A549 (cell line): ENCODE measurements at regions of chr2 and their contacts with region 1.

Region 1: DNA sequence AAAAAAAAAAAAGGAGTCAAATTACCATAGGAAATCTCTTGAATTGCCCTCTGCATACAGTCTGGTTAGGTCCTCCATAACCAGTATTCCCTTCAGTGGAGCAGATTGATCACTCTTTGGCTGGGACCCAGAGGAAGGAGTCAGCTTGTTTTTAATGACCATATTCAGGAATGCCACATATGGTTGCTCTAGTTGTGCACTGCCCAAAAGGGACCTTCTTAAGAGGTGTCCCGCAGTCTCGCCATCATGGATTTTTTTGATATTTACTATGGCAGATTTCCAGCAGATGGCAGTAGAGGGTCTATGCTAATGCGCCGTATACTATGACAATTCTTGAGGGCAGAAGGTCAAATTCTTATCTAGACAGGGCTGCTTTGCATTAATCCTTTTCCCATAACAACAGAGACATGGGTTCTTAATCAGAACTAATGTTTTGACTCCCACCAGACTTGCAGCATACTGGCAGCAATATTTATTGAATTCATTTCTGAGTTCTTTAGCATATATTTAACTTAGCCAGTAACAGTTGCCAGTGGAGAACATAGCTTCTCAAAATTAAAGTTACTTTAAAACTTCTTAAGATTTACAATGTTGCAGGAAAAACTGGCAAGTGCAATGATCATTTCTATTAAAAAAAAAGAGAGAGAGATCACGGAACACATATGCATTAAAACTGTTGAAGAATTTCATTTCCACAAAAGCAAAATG is 31.8 kb upstream of the INPP4A start:
- DNase-seq: peak; percentile 54 to 72
- ATAC-seq: peak; percentile 94 to 96
- H3K4me3 ChIP-seq: no peak overlapping the region
- H3K27ac ChIP-seq: no peak overlapping the region
- H3K4me1 ChIP-seq: no peaks in the 10 kb centered on the region; the same call in 2 of the 3 replicates
- CTCF ChIP-seq: peak; percentile 86
- EP300 ChIP-seq: no peak
- POLR2A ChIP-seq: no peak
- RAD21 ChIP-seq: peak; percentile 79 to 86

Region 2: DNA sequence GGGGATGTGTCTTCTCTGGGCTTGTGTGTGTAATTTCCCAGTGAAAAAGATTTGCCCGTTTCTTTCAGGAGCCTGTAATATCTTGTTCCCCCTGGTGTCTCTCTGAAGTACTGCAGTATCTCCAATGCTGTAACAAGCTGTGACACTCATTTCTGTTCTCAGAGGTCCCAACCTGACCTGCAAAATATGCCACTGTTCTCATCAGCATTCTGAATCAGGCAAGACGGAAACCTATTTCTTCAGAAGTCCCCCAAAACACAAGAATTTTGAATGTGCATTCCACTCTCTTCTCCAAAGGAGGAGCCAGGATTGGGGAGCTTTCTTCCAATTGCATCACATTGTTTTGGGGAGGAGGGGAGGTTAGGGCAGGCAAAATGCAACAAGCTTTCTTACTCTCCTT is 143.6 kb before region 1 on chr2:
- CTCF ChIA-PET with region 1: no interaction called
- POLR2A ChIA-PET with region 1: no interaction called
- DNase-seq: peak; percentile 44 to 51
- ATAC-seq: peak; percentile 74 to 80; a peak in 5 of 6 replicates
- H3K4me3 ChIP-seq: no peak overlapping the region
- H3K27ac ChIP-seq: no peak overlapping the region; a peak in 1 of 6 replicates
- H3K4me1 ChIP-seq: no peaks in the 10 kb centered on the region
- CTCF ChIP-seq: peak; percentile 53
- EP300 ChIP-seq: no peak
- POLR2A ChIP-seq: no peak
- RAD21 ChIP-seq: peak; percentile 55 to 69; a peak in 4 of 5 replicates

Region 3: GRCh38 chr2:98396745-98397355 is 16.1 kb before region 1 on chr2:
- CTCF ChIA-PET with region 1: interaction called, 12 read pairs
- POLR2A ChIA-PET with region 1: no interaction called
- DNase-seq: no peak
- ATAC-seq: no peak
- H3K4me3 ChIP-seq: no peak overlapping the region
- H3K27ac ChIP-seq: no peak overlapping the region
- H3K4me1 ChIP-seq: no peaks in the 10 kb centered on the region
- CTCF ChIP-seq: no peak
- EP300 ChIP-seq: no peak
- POLR2A ChIP-seq: no peak
- RAD21 ChIP-seq: no peak

Region 4: DNA sequence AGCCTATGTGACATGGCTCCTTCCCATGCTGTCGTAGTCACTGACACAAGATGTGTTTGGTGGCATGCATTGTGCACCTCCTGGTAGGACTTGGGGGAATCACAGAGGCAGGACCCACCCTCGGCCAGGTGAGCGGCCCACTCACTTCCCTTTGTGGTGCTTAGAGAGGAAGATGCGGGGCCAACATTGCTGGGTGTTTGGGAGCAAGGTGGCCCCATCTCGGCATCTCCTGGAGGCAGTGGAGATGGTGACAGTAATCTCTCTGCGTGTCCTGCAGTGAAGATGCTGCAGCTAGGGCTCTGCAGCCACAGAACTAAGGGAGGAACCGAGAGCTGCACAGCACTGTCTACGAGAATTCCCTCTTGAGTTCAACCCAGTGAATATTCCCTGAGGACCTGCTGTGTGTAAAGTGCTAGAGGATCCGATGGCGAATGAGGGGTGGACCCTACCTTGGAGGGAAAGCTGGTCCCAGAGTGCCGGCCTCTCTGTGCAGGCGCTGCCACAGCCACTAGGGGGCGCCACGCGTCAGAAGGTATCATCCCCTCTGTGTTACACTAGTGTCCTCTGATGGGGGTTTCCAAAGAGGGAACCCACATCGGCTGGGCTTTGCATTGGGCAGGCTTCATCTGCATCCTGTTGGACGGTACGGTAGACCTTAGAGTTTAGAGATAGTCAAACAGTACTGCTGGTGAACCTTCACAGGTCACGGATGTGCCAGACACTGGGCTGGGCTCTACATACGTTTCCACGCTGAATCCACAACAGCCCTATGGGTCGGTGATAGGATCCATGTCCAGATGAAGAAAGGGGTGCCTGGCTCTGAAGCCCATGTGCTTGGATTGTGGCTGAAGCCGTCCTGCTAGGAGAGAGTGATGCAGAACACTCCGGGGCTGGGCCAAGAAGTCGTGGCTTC is 156.2 kb after region 1 on chr2:
- CTCF ChIA-PET with region 1: interaction called, 16 read pairs
- POLR2A ChIA-PET with region 1: no interaction called
- DNase-seq: peak; percentile 22 to 51
- ATAC-seq: peak; percentile 71 to 93; a peak in 4 of 6 replicates
- H3K4me3 ChIP-seq: no peak overlapping the region
- H3K27ac ChIP-seq: no peak overlapping the region
- H3K4me1 ChIP-seq: no peaks in the 10 kb centered on the region
- CTCF ChIP-seq: peak; percentile 71
- EP300 ChIP-seq: no peak
- POLR2A ChIP-seq: no peak
- RAD21 ChIP-seq: peak; percentile 37 to 42; a peak in 3 of 5 replicates

Region 5: GRCh38 chr2:98601532-98602132 is 188.7 kb after region 1 on chr2:
- CTCF ChIA-PET with region 1: interaction called, 23 read pairs
- POLR2A ChIA-PET with region 1: no interaction called
- DNase-seq: peak; percentile 52 to 66
- ATAC-seq: peak; percentile 99 to 100
- H3K4me3 ChIP-seq: no peak overlapping the region
- H3K27ac ChIP-seq: no peak overlapping the region
- H3K4me1 ChIP-seq: peaks cover 11% of the 10 kb centered on the region
- CTCF ChIP-seq: peak; percentile 61
- EP300 ChIP-seq: no peak
- POLR2A ChIP-seq: no peak
- RAD21 ChIP-seq: peak; percentile 62 to 70

Region 6: DNA sequence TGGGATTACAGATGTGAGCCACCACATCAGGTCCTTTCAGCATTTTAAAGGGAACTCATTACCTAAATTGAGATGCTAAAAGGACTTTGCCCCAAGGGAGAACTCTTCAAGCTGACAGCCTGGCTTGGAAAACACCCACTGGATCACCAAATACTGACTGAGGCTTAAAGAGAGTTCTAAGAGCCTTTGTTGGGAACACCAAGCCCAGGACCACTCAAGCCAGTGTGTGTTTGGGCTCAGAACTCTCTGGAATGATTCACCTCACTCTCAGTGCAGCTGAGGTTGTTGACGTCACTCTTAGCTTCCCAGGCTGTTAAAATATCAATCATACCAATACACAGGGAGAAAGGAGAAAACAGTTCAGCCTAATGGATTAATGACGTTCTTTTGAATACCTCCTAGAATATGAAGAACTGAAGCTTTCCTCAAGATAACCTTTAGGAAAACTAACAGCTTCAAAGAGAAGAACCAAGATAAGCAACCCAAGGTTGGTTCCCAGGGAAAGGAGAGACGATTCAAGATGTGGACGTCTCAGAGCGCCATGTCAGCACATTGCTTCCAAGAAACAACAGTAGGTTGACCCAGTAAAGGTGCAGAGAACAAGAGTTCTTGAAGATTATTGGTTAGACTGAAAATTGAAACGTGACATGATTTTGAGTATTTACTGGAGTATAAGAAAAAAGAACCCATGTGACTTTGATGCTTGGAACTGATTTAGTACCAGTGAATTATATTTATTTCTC is 366.0 kb after region 1 on chr2:
- CTCF ChIA-PET with region 1: no interaction called
- POLR2A ChIA-PET with region 1: no interaction called
- DNase-seq: no peak
- ATAC-seq: no peak
- H3K4me3 ChIP-seq: no peak overlapping the region
- H3K27ac ChIP-seq: no peak overlapping the region
- H3K4me1 ChIP-seq: no peaks in the 10 kb centered on the region
- CTCF ChIP-seq: no peak
- EP300 ChIP-seq: no peak
- POLR2A ChIP-seq: no peak
- RAD21 ChIP-seq: no peak

Region 7: GRCh38 chr2:98854682-98855081 is 441.8 kb after region 1 on chr2:
- CTCF ChIA-PET with region 1: no interaction called
- POLR2A ChIA-PET with region 1: no interaction called
- DNase-seq: no peak
- ATAC-seq: no peak
- H3K4me3 ChIP-seq: no peak overlapping the region
- H3K27ac ChIP-seq: no peak overlapping the region
- H3K4me1 ChIP-seq: no peaks in the 10 kb centered on the region
- CTCF ChIP-seq: no peak
- EP300 ChIP-seq: no peak
- POLR2A ChIP-seq: no peak
- RAD21 ChIP-seq: no peak